ENCODE measurements at regions of chr2 and their contacts with region 1.

Region 1: GRCh38 chr2:120312861-120313694 is 32.9 kb upstream of the INHBB start:
- DNase-seq: peak; percentile 74
- H3K4me3 ChIP-seq: peak overlapping the region; percentile 41 to 45 (median 42)
- H3K27ac ChIP-seq: no peak overlapping the region
- H3K4me1 ChIP-seq: peaks cover 4% of the 10 kb centered on the region
- H3K27me3 ChIP-seq: no peaks in the 10 kb centered on the region
- CTCF ChIP-seq: peak; percentile 79 to 93

Region 2: DNA sequence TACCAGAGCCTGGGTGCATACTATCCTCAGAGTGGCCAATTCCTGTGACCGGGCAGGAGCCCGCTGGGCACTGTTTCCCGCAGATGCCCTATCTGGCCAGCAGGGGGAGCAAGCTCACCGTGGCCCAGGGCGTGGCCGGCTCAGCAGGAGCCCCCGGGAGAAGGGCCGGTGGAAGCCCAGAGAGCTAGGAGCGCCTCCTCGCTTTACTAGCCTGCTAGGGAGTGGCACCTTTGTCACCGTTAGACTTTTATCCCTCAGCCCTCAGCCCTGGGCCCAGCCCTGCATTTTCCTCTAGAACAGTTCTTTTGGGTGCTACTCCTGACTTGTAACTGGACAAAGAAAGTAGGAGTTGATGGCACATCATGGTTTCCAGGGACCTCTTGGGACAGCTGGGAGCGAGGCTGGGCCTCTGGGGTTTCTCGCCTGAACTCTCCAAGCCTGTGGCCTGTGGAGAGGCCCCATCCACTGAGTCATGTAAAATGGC is 610.1 kb before region 1 on chr2:
- CTCF ChIA-PET with region 1: no interaction called
- dilution Hi-C with region 1: no loop called
- in situ Hi-C with region 1: no loop called
- intact Hi-C with region 1: loop called (anchors 2 kb)
- DNase-seq: peak; percentile 44
- H3K4me3 ChIP-seq: no peak overlapping the region
- H3K27ac ChIP-seq: no peak overlapping the region
- H3K4me1 ChIP-seq: no peaks in the 10 kb centered on the region
- H3K27me3 ChIP-seq: no peaks in the 10 kb centered on the region
- CTCF ChIP-seq: peak; percentile 90 to 99

Region 3: GRCh38 chr2:120223034-120223912 is 89.8 kb before region 1 on chr2 and contains the start of gene TMEM185B:
- CTCF ChIA-PET with region 1: interaction called, 3 read pairs
- dilution Hi-C with region 1: no loop called
- in situ Hi-C with region 1: no loop called
- intact Hi-C with region 1: loop called (anchors 1 kb)
- DNase-seq: peak; percentile 87
- H3K4me3 ChIP-seq: peak within 1 kb of the TSS; percentile 45 to 64 (median 60)
- H3K27ac ChIP-seq: peak within 1 kb of the TSS; percentile 69
- H3K4me1 ChIP-seq: peaks cover 19% of the 10 kb centered on the region
- H3K27me3 ChIP-seq: no peaks in the 10 kb centered on the region
- CTCF ChIP-seq: peak; percentile 20 to 50
- total RNA-seq, gene TMEM185B: 30.2 to 45.7 TPM

Region 4: DNA sequence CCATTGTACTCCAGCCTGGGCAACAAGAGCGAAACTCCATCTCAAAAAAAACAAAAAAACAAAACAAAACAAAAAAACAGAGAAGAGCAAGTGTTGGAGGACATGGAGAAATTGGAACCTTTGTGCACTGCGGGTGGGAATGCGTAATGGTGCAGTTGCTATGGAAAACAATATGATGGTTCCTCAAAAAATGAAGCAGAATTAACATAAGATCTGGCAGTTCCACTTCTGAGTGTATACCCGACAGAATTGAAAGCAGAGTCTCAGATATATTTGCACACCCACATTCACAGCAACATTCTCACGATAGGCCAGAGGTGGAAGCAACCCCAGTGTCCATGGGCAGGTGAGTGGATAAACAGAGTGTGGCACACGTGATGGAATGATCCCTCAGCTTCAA is 71.4 kb before region 1 on chr2:
- CTCF ChIA-PET with region 1: no interaction called
- dilution Hi-C with region 1: no loop called
- in situ Hi-C with region 1: no loop called
- intact Hi-C with region 1: no loop called
- DNase-seq: no peak
- H3K4me3 ChIP-seq: no peak overlapping the region
- H3K27ac ChIP-seq: no peak overlapping the region
- H3K4me1 ChIP-seq: peaks cover 27% of the 10 kb centered on the region
- H3K27me3 ChIP-seq: no peaks in the 10 kb centered on the region
- CTCF ChIP-seq: no peak

Region 5: DNA sequence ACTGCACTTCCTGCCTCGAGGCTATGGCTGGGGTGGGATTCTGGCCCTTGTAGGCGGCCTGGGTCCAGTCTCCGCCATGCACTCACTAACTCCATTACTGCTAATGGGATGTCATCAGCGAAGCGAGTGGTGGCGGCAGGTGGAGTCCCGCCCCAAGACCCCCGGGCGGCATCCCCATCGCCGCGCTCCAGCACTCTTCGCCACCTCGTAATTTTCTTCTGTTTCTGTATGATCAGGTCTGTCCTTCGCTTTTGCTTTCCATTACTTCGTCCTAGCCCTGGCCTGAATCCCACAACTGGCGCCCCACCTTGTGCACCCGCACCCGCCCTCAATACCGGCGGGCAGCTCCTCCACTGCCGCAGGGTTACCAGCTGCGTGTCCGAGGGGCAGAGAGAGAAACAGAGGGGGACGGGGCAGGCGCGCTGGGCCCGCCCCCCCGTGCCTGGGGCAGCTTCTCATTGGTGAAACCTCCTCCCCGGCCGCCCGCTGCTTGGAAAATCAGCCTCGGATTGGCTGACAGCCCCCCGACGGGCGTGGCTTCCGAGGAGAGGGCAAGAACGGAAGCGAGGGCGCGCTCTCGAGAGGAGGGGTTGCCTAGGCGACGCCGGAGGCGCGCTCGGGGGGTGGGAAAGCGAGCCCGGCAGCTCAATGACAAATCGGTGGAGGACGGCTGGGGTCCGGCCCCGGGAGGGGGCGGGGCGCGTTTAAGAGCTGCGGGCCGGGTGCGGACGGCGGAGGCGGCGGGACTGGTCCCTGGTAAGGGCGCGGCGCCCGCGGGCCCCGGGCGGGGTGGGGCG is 60.7 kb before region 1 on chr2 and contains the start of gene RALB:
- CTCF ChIA-PET with region 1: interaction called, 4 read pairs
- dilution Hi-C with region 1: no loop called
- in situ Hi-C with region 1: no loop called
- intact Hi-C with region 1: loop called (anchors 1 kb)
- DNase-seq: peak; percentile 98
- H3K4me3 ChIP-seq: peak within 1 kb of the TSS; percentile 67 to 79 (median 69)
- H3K27ac ChIP-seq: peak within 1 kb of the TSS; percentile 74
- H3K4me1 ChIP-seq: peaks cover 14% of the 10 kb centered on the region
- H3K27me3 ChIP-seq: no peaks in the 10 kb centered on the region
- CTCF ChIP-seq: no peak
- total RNA-seq, gene RALB: 34.0 to 49.8 TPM

Region 6: DNA sequence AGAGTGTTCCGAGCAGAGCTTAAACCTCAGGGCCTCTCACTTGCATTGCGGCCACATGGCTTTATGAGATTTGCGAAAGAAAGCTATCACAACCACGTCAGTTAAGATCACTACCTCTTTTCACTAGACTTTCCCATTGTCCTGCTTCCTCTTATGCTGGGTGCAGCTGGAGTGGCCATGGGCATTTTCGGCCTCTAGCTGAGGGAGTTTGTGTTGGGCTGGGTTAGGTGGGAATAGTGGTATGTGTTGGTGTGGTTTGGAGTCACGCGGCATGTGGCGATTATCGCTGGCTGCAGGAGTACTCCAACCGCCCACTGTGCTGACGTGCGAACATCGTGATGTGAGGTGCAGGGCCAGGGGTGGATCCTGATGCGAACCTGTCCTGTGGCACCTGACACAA is 33.4 kb before region 1 on chr2:
- CTCF ChIA-PET with region 1: no interaction called
- dilution Hi-C with region 1: no loop called
- in situ Hi-C with region 1: no loop called
- intact Hi-C with region 1: no loop called
- DNase-seq: no peak
- H3K4me3 ChIP-seq: no peak overlapping the region
- H3K27ac ChIP-seq: no peak overlapping the region
- H3K4me1 ChIP-seq: no peaks in the 10 kb centered on the region
- H3K27me3 ChIP-seq: no peaks in the 10 kb centered on the region
- CTCF ChIP-seq: no peak

Region 7: DNA sequence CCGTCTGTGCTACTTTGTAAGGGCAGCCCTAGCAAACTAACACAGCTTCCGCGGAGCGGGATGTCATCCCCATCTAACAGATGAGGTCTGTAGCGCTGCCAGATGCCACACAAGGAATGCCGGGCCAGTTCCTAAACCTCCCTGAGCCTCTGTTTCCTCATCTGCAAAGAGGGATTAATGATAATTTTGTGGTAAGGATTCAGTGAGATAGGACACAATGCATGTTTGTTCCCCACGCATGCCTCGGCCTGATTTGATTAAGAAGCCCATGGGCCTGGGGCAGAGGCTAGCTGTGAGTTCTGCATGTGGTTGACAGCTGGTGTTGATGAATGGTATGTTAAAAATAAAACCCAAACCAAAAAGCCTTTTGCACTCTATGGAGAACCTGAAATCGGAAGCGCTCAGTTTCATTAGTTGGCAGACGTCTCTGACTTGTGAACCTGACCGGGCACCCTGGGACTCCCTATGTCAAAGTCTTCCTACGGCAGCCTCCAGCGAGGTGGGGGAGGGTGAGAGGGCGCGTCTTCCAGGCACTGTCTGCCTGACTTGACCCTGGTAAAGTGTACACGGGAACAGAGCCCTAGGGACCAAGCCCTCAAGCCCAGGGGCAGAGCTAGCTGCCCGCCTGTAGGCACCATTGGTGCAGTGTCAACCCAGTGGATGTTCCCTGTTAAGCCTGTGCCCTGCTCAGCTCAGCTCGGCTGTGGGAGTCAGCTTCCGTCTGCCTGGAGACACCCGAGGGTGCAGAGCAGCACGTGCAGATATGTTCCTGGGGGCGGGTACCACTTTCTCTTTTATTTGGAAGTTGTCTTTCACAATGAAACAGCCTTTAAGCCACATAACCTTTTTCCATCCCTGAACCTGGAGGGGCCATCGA is 18.1 kb after region 1 on chr2:
- CTCF ChIA-PET with region 1: no interaction called
- dilution Hi-C with region 1: no loop called
- in situ Hi-C with region 1: no loop called
- intact Hi-C with region 1: no loop called
- DNase-seq: no peak
- H3K4me3 ChIP-seq: no peak overlapping the region
- H3K27ac ChIP-seq: no peak overlapping the region
- H3K4me1 ChIP-seq: no peaks in the 10 kb centered on the region
- H3K27me3 ChIP-seq: no peaks in the 10 kb centered on the region
- CTCF ChIP-seq: no peak